ENCODE measurements at regions of chr5 and their contacts with region 1.

Region 1: GRCh38 chr5:73902327-73903051 is 276.5 kb downstream of the ARHGEF28 start:
- DNase-seq: peak; percentile 62
- H3K4me3 ChIP-seq: no peak overlapping the region
- H3K27ac ChIP-seq: no peak overlapping the region
- H3K4me1 ChIP-seq: no peaks in the 10 kb centered on the region
- H3K27me3 ChIP-seq: no peaks in the 10 kb centered on the region
- CTCF ChIP-seq: peak; percentile 42 to 45
- POLR2A ChIP-seq: no peak

Region 2: GRCh38 chr5:73917433-73917832 is 14.9 kb after region 1 on chr5:
- CTCF ChIA-PET with region 1: interaction called, 19 read pairs
- POLR2A ChIA-PET with region 1: no interaction called
- dilution Hi-C with region 1: no loop called
- intact Hi-C with region 1: no loop called
- DNase-seq: no peak
- H3K4me3 ChIP-seq: no peak overlapping the region
- H3K27ac ChIP-seq: no peak overlapping the region
- H3K4me1 ChIP-seq: peaks cover 10% of the 10 kb centered on the region
- H3K27me3 ChIP-seq: no peaks in the 10 kb centered on the region
- CTCF ChIP-seq: no peak
- POLR2A ChIP-seq: no peak